ENCODE measurements at regions of chr15 and their contacts with region 1.

Region 1: DNA sequence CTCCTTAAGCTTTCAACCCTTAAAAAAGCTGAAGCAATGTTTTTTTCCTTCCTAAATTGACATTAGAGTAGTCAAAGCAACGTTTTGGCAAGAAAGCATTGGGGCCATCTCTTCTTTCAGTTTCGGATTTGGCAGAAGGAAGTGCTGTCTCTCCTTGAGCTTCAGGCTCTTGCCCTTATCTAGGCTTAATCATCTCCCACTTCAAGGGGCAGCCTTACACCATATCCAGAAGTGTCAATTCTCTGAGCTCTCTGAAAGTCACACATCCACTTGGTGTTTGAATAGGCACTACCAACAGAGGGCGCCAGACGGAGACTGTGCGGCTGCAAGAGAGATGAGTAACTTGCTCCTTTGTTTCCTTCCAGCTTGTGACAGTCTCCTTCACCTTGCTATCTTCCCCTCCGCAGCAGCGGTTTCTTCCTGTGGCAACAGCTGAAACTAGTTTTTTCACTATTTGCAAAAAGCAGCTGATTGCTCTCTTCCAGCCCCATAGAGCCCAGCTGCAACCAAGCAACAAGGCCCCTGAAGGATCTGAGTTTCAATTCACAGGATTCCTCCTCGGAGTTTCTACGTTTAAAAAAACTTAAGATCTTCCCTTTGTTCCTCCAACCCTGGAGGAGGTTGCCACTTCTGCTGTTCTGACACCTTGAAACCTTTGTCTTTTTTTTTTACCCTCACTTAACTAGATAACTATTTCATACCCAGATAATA is 147.0 kb upstream of the SLCO3A1 start:
- DNase-seq: peak; percentile 41 to 71 (median 51)
- ATAC-seq: peak; percentile 82
- H3K4me3 ChIP-seq: no peak overlapping the region
- H3K27ac ChIP-seq: no peak overlapping the region
- H3K4me1 ChIP-seq: no peaks in the 10 kb centered on the region
- H3K27me3 ChIP-seq: no peaks in the 10 kb centered on the region
- CTCF ChIP-seq: peak; percentile 79 to 88 (median 79)
- EP300 ChIP-seq: no peak
- POLR2A ChIP-seq: no peak
- RAD21 ChIP-seq: peak; percentile 42 to 54; a peak in 3 of 4 replicates

Region 2: DNA sequence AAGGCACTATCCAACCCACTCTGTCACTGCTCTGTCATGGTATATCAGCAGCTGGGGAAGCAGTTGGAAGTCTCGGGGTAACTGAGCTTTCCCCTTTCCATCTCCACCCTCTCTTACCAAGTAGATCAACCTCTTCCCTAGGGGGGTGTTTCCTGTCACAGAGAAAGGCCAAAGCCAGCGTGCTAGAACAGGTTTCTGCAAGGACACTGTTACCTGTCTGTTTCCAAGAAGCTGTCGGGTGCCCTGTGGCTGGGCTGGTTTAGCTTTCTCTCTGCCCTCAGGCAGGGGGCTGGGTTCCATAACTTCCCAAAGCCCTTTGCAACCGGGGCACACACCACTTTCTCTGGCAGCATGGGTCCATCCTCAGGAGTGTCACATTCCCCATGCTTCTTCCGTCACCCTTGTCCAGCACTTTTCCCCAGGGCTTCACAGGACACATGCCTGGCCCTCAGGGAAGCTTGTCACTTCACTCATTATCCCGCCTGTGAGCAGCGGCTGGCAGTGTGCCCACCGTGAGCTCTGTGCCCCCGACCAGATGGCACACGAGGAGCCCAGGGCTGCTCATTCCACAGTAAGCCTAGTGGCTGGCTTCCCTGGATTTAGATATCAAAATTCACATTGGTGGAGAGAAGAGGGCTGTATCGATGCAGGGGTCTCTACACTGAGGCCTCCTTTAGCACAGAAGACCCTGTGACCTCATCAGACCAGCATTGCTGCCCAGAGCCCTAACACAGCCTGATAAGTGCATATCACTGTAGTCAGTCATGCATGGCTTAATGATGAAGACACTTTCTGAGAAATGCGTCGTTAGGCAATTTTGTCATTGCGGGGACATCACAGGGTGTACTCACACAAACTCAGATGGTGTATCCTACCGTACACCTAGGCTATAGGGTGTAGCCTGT is 352.8 kb after region 1 on chr15:
- CTCF ChIA-PET with region 1: no interaction called
- POLR2A ChIA-PET with region 1: no interaction called
- in situ Hi-C with region 1: no loop called
- intact Hi-C with region 1: no loop called
- DNase-seq: no peak
- ATAC-seq: no peak
- H3K4me3 ChIP-seq: no peak overlapping the region
- H3K27ac ChIP-seq: no peak overlapping the region
- H3K4me1 ChIP-seq: no peaks in the 10 kb centered on the region
- H3K27me3 ChIP-seq: peaks cover 0 to 26% of the 10 kb centered on the region in 2 experiments; a peak in 3 of 5 replicates
- CTCF ChIP-seq: no peak
- EP300 ChIP-seq: no peak
- POLR2A ChIP-seq: no peak
- RAD21 ChIP-seq: no peak

Region 3: GRCh38 chr15:92077353-92078085 is 371.0 kb after region 1 on chr15:
- CTCF ChIA-PET with region 1: no interaction called
- POLR2A ChIA-PET with region 1: no interaction called
- in situ Hi-C with region 1: no loop called
- intact Hi-C with region 1: loop called (anchors 5 kb)
- DNase-seq: peak; percentile 55 to 59 (median 57)
- ATAC-seq: peak; percentile 88
- H3K4me3 ChIP-seq: no peak overlapping the region
- H3K27ac ChIP-seq: no peak overlapping the region
- H3K4me1 ChIP-seq: no peaks in the 10 kb centered on the region
- H3K27me3 ChIP-seq: peaks cover 0 to 36% of the 10 kb centered on the region in 2 experiments; a peak in 3 of 5 replicates
- CTCF ChIP-seq: peak; percentile 78 to 80 (median 79)
- EP300 ChIP-seq: no peak
- POLR2A ChIP-seq: no peak
- RAD21 ChIP-seq: peak; percentile 81 to 85